Colonic mucosa (tissue), 4 donors: ENCODE measurements at regions of chr12 and their contacts with region 1.

Region 1: DNA sequence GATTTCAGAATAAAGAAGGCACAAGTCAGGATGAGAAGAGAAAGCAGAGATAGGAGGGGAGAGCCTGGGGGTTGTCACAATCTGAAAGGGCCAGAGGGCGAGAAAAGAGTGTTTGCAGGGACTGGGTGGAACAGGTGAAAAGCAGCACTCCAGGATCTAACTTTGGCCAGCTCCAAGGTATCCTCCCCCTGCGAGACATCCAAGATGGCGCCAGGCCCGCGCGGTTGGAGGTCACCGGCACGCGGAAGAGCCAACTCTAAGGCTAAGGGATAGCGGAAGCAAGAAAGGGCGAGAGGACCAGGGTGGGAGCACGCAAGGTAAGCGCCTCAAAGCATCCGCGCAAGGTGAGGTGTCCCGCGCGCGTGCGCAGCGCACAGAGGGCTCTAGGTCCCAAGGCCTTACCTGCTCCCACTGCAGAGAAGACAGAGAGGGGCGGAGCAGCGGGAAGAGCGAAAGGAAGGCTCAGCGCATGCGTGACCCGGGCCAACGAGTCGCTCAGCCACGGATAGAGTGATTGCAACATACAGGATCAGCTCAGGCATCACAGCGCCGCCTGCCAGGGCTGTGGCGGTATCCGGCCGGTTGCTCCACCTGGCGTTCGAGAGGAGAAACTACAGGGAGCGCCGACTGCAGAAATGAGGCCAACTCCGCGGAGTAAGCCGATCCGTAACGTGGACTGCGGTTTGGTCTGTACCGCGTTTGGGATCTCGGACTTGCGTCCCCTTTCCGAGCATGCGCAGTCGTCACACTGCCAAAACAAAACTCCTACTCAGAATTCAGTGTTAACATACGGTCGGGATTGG is at the start of gene ATP5MC2:
- DNase-seq: peak; percentile 97
- H3K4me3 ChIP-seq: peak within 1 kb of the TSS; percentile 57
- H3K27ac ChIP-seq: peak within 1 kb of the TSS; percentile 79
- H3K4me1 ChIP-seq: peaks cover 7% of the 10 kb centered on the region
- H3K27me3 ChIP-seq: no peaks in the 10 kb centered on the region
- CTCF ChIP-seq: peak; percentile 97
- total RNA-seq, gene ATP5MC2: 346 to 392 TPM

Region 2: GRCh38 chr12:53543539-53543938 is 132.3 kb before region 1 on chr12:
- intact Hi-C with region 1: loop called (anchors 2 kb)
- DNase-seq: peak; percentile 54
- H3K4me3 ChIP-seq: no peak overlapping the region
- H3K27ac ChIP-seq: no peak overlapping the region
- H3K4me1 ChIP-seq: no peaks in the 10 kb centered on the region
- H3K27me3 ChIP-seq: no peaks in the 10 kb centered on the region
- CTCF ChIP-seq: peak; percentile 76

Region 3: GRCh38 chr12:53625946-53626701 is 49.7 kb before region 1 on chr12 and contains the start of gene ATF7:
- intact Hi-C with region 1: loop called (anchors 2 kb)
- DNase-seq: peak; percentile 99
- H3K4me3 ChIP-seq: peak within 1 kb of the TSS; percentile 44
- H3K27ac ChIP-seq: peak within 1 kb of the TSS; percentile 67
- H3K4me1 ChIP-seq: peaks cover 5% of the 10 kb centered on the region
- H3K27me3 ChIP-seq: no peaks in the 10 kb centered on the region
- CTCF ChIP-seq: no peak
- total RNA-seq, gene ATF7: 31.1 to 38.5 TPM